GM12878 (cell line): ENCODE measurements at regions of chr12 and their contacts with region 1.

Region 1: DNA sequence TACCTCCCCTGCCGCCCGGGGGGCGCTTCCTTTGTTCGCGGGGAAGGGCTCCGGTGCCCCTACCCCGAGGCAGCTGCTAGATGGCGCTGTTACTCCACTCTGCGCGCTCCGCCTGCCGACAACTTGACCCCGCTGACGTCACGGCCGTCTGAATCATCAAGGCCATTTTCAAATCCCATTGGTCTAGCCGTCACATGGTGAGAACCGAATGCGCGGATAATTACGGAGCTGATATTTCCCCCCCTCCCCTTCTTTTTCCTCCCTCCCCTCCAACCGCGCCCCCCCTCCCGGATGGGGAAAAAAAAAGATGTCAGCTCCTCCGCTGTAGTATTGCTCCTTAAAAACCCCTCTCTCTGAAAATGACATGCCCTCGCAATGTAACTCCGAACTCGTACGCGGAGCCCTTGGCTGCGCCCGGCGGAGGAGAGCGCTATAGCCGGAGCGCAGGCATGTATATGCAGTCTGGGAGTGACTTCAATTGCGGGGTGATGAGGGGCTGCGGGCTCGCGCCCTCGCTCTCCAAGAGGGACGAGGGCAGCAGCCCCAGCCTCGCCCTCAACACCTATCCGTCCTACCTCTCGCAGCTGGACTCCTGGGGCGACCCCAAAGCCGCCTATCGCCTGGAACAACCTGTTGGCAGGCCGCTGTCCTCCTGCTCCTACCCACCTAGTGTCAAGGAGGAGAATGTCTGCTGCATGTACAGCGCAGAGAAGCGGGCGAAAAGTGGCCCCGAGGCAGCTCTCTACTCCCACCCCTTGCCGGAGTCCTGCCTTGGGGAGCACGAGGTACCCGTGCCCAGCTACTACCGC is at the start of gene HOXC10:
- DNase-seq: peak; percentile 38
- ATAC-seq: peak; percentile 80
- H3K4me3 ChIP-seq: peak within 1 kb of the TSS; percentile 44; the same call in 1 of the 2 replicates
- H3K27ac ChIP-seq: no peak within 1 kb of the TSS
- H3K4me1 ChIP-seq: peaks cover 24% of the 10 kb centered on the region
- H3K27me3 ChIP-seq: peaks cover 30 to 50% of the 10 kb centered on the region in 2 experiments
- CTCF ChIP-seq: peak; percentile 67 to 93 (median 86)
- EP300 ChIP-seq: no peak
- POLR2A ChIP-seq: no peak
- RAD21 ChIP-seq: peak; percentile 77
- polyA plus RNA-seq, gene HOXC10: not detected

Region 2: GRCh38 chr12:53770281-53770680 is 214.8 kb before region 1 on chr12:
- CTCF ChIA-PET with region 1: interaction called, 4 read pairs
- POLR2A ChIA-PET with region 1: no interaction called
- RAD21 ChIA-PET with region 1: no interaction called
- SMC1A ChIA-PET with region 1: no interaction called
- in situ Hi-C with region 1: no loop called
- intact Hi-C with region 1: loop called (anchors 5 kb)
- DNase-seq: no peak
- ATAC-seq: no peak
- H3K4me3 ChIP-seq: no peak overlapping the region
- H3K27ac ChIP-seq: no peak overlapping the region
- H3K4me1 ChIP-seq: no peaks in the 10 kb centered on the region
- H3K27me3 ChIP-seq: no peaks in the 10 kb centered on the region
- CTCF ChIP-seq: no peak
- EP300 ChIP-seq: no peak
- POLR2A ChIP-seq: no peak
- RAD21 ChIP-seq: no peak

Region 3: GRCh38 chr12:54005853-54006686 is 21.0 kb after region 1 on chr12:
- CTCF ChIA-PET with region 1: interaction called, 13 read pairs
- POLR2A ChIA-PET with region 1: no interaction called
- RAD21 ChIA-PET with region 1: interaction called, 5 read pairs
- SMC1A ChIA-PET with region 1: interaction called, 4 read pairs
- in situ Hi-C with region 1: no loop called
- intact Hi-C with region 1: no loop called
- DNase-seq: no peak
- ATAC-seq: peak; percentile 91
- H3K4me3 ChIP-seq: peak overlapping the region; percentile 54; the same call in 1 of the 2 replicates
- H3K27ac ChIP-seq: no peak overlapping the region
- H3K4me1 ChIP-seq: peaks cover 6% of the 10 kb centered on the region
- H3K27me3 ChIP-seq: peaks cover 33 to 34% of the 10 kb centered on the region in 2 experiments
- CTCF ChIP-seq: peak; percentile 74 to 93 (median 84)
- EP300 ChIP-seq: 0 out of 4 replicates have a peak, but pooled peaks of 1 of the 2 experiments have one; percentile 15
- POLR2A ChIP-seq: no peak
- RAD21 ChIP-seq: peak; percentile 91

Region 4: DNA sequence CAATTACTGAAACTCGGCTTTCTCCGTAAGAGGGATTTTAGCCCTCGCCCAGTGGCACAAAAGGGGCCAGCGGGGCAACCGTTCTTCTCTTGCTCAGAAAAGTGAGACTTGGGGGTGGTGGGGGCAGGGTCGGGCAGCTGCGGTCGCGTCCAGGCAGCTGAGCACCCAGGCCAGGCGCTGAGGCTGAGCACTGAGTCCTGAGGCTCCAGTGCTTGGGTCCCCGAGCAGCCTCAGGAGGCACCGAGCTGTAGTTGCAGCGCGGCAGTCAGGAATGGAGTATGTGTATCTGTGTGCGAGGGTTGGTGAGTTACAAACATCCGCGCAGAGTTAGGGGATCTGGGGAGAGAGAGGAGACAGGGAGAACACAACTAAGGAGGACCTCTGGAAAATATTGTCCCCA is 39.0 kb after region 1 on chr12:
- CTCF ChIA-PET with region 1: interaction called, 12 read pairs
- POLR2A ChIA-PET with region 1: no interaction called
- RAD21 ChIA-PET with region 1: no interaction called
- SMC1A ChIA-PET with region 1: no interaction called
- in situ Hi-C with region 1: no loop called
- intact Hi-C with region 1: no loop called
- DNase-seq: no peak
- ATAC-seq: no peak
- H3K4me3 ChIP-seq: no peak overlapping the region
- H3K27ac ChIP-seq: no peak overlapping the region
- H3K4me1 ChIP-seq: peaks cover 16% of the 10 kb centered on the region
- H3K27me3 ChIP-seq: peaks cover 5 to 10% of the 10 kb centered on the region in 2 experiments
- CTCF ChIP-seq: no peak
- EP300 ChIP-seq: no peak
- POLR2A ChIP-seq: no peak
- RAD21 ChIP-seq: no peak

Region 5: DNA sequence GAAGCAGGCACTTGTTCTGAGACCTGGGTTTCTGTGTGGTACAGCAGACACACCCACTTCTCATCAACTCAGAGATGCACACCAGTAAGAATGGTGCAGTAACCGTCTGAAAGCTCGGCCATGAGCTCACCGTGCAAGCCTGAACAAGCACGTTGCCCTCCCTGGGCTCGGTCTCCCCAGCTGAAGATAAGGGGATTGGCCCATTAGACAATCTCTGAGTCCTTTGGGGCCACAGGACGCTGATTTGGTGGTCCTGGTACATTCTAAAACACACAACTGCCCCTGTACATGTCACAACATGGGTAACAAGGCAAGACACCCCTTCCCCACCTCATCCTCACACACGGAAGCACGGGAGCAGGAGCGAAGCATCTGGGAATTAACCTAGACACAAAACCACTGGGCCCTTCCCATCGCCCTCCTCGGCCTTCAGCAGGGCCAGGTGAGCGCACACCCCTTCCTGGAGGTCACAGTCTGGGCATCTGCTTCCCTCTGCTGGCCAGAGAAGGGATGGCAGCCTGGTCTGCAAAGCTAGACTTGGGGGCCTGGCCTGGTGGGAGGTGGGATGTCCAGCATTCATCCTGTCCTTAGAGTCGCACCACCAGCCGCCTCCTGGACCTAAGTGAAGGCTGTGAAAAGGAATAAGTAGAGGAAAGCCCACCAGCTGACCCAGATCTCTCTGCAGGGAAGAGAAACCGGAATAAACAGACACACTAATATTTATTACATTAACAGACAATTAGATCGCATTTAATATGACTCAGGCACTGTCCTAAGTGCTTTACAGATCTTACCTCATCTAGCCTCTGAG is 222.6 kb after region 1 on chr12:
- CTCF ChIA-PET with region 1: interaction called, 54 read pairs
- POLR2A ChIA-PET with region 1: no interaction called
- RAD21 ChIA-PET with region 1: interaction called, 14 read pairs
- SMC1A ChIA-PET with region 1: interaction called, 29 read pairs
- in situ Hi-C with region 1: no loop called
- intact Hi-C with region 1: no loop called
- DNase-seq: no peak
- ATAC-seq: peak; percentile 98
- H3K4me3 ChIP-seq: no peak overlapping the region
- H3K27ac ChIP-seq: no peak overlapping the region
- H3K4me1 ChIP-seq: no peaks in the 10 kb centered on the region
- H3K27me3 ChIP-seq: peaks cover 0 to 2% of the 10 kb centered on the region in 2 experiments; a peak in 3 of 4 replicates
- CTCF ChIP-seq: peak; percentile 93 to 97 (median 97)
- EP300 ChIP-seq: no peak
- POLR2A ChIP-seq: no peak
- RAD21 ChIP-seq: peak; percentile 87